ENCODE measurements at regions of chr1 and their contacts with region 1.

Region 1: GRCh38 chr1:975896-976683 is 5.8 kb downstream of the PERM1 start:
- DNase-seq: peak; percentile 59 to 70 (median 64)
- H3K4me3 ChIP-seq: peak overlapping the region in 1 of 2 donors; percentile 9
- H3K4me3 Mint-ChIP-seq: peak overlapping the region in 5 of 8 donors; percentile 6 to 36 (median 23)
- H3K27ac ChIP-seq: no peak overlapping the region
- H3K27ac Mint-ChIP-seq: peak overlapping the region in 1 of 7 donors; percentile 16
- H3K4me1 ChIP-seq: peaks cover 9% of the 10 kb centered on the region
- H3K4me1 Mint-ChIP-seq: peaks cover 3 to 12% (median 5%) of the 10 kb centered on the region in 4 donors
- H3K27me3 ChIP-seq: no peaks in the 10 kb centered on the region
- H3K27me3 Mint-ChIP-seq: peaks cover 2 to 8% of the 10 kb centered on the region in 2 donors

Region 2: DNA sequence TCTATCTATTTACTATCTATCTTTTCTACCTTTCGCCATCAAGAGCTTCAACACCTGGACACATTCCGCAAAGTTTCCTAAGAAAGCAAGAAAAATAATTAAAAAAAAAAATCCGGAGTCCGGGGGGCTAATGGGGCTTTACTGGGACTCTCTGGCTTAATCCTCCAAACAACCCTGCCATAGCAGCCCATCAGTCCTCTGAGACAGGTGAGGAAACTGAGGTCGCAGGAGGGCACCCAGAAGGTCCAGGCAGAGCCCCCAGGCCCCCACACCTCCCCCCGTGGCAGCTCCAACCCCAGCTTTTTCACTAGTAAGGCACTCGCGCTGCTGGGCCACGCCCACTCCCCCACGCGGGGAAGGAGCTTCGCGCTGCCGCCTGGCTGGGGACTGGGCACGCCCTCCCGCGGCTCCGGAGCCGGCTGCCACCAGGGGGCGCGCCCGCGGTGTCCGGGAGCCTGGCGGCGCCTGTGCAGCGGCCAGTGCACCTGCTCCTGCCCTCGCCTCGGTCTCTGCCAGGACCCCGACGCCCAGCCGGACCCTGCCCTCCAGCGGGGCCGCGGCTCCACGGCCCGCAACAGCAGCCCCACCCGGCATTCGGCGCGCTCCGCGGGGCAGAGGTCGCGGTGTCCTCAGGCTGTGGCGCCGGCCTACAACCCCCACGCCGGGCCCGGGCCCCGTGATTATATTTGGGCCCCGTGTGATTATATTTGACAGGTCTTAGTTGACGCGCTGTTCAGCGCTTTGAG is 106.4 kb before region 1 on chr1:
- CTCF ChIA-PET with region 1: interaction called, 11 read pairs
- POLR2A ChIA-PET with region 1: no interaction called
- intact Hi-C with region 1: no loop called
- DNase-seq: peak; percentile 84 to 87 (median 84)
- H3K4me3 ChIP-seq: no peak overlapping the region
- H3K4me3 Mint-ChIP-seq: peak overlapping the region in 4 of 8 donors; percentile 24 to 36 (median 31)
- H3K27ac ChIP-seq: no peak overlapping the region
- H3K27ac Mint-ChIP-seq: no peak overlapping the region
- H3K4me1 ChIP-seq: peaks cover 4% of the 10 kb centered on the region
- H3K4me1 Mint-ChIP-seq: peaks cover 0 to 5% (median 0%) of the 10 kb centered on the region in 4 donors
- H3K27me3 ChIP-seq: no peaks in the 10 kb centered on the region
- H3K27me3 Mint-ChIP-seq: peaks cover 16 to 23% of the 10 kb centered on the region in 2 donors

Region 3: GRCh38 chr1:904310-904950 is 71.7 kb before region 1 on chr1:
- CTCF ChIA-PET with region 1: interaction called, 14 read pairs
- POLR2A ChIA-PET with region 1: interaction called, 6 read pairs
- intact Hi-C with region 1: loop called (anchors 1 kb)
- DNase-seq: peak; percentile 82 to 88 (median 88)
- H3K4me3 ChIP-seq: no peak overlapping the region
- H3K4me3 Mint-ChIP-seq: peak overlapping the region; percentile 31 to 80 (median 64)
- H3K27ac ChIP-seq: no peak overlapping the region
- H3K27ac Mint-ChIP-seq: peak overlapping the region in 2 of 7 donors; percentile 57 to 72
- H3K4me1 ChIP-seq: peaks cover 12% of the 10 kb centered on the region
- H3K4me1 Mint-ChIP-seq: peaks cover 0 to 23% (median 7%) of the 10 kb centered on the region in 4 donors
- H3K27me3 ChIP-seq: no peaks in the 10 kb centered on the region
- H3K27me3 Mint-ChIP-seq: peaks cover 13 to 22% of the 10 kb centered on the region in 2 donors